Activated B cell treated with CpG ODN at 0.5 μM for 24 hours (primary cell): ENCODE measurements at regions of chr9 and their contacts with region 1.

Region 1: DNA sequence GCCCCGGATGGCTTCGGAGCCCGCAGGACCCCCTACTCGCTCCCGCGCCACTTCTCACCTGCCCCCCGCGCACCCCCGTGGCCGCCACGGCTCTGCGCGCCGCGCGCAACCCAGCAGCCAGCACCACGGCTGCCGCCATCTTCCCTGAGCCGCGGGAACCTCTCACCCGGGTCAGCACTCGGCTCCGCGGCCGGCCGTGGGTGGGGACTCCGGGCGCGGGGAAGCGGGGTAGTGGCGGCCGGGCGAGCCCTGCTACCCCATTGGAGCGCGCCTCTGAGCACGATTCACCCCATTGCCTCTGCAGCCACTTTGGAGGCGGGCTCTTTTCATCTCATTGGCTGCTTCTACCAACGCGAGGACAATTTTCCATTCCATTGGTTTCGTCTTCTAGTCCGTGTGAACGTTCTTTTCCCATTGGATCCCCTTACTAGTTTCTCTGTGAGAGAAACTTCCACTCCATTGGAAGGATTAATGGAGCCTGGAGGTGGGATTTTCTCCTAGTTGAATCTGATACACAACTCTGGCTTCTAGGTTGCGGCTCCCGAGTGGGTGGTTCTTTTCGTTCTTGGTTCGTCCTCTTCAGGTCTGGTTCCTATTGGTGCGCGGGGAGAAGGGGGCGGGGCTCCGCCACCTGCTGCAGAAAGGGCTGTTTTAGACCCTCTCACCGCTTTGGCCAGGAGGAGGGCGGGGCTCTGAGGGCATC is at the start of gene HINT2:
- DNase-seq: peak; percentile 90
- ATAC-seq: peak; percentile 83
- H3K4me3 Mint-ChIP-seq: peak within 1 kb of the TSS; percentile 98
- H3K27ac Mint-ChIP-seq: peak within 1 kb of the TSS; percentile 99
- H3K4me1 Mint-ChIP-seq: peaks cover 36% of the 10 kb centered on the region
- H3K27me3 Mint-ChIP-seq: no peaks in the 10 kb centered on the region
- CTCF ChIP-seq: no peak
- total RNA-seq, gene HINT2: 27.9 and 34.0 TPM in 2 replicates

Region 2: DNA sequence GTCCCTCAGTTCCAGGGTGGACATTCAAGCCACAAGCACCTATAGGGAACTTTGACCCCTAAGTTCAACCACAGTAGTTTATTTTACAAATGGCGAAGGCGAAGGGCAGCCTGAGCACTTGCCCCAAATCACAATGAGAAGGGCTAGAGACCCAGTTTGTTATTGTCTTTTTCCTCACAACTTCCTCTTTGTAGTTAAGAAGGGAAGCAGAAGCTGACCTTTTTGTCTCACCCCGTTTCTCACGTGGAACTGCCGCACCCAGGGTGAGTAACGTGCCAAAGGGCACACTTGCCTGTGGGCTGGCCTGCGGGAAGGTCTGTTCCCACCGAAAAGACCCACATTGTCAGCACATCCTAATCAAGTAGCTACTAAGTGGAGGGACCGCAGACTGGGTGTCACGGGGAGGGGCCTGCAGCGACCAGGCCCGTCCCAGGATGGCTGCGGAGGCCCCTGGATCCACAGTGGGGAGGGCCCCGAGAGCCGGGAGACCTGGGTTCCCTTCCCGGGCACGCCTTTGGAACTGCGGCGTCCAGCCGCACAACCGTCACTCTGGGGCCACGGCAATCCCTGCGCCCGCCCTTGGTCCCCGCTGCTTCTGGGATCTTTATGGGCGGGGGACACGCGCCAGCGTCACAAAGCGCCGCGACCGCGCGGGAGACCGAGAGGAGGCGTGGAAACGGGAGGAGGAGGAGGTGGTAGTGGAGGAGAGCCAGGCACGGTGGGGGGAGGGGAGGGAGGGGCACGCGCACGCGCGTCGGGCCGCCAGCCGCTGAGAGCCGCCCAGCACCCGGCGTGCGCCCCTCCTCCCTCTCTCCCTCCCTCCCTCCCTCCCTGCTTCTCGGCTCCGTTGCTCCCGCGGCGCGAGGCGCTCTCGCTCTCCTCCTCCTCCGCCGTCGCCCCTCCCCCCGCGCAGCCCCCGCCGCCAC is 1998.4 kb before region 1 on chr9 and contains the start of gene UBE2R2:
- CTCF ChIA-PET with region 1: no interaction called
- POLR2A ChIA-PET with region 1: no interaction called
- intact Hi-C with region 1: loop called (anchors 10 kb)
- DNase-seq: peak; percentile 79
- ATAC-seq: peak; percentile 72
- H3K4me3 Mint-ChIP-seq: peak within 1 kb of the TSS; percentile 90
- H3K27ac Mint-ChIP-seq: peak within 1 kb of the TSS; percentile 98
- H3K4me1 Mint-ChIP-seq: peaks cover 61% of the 10 kb centered on the region
- H3K27me3 Mint-ChIP-seq: no peaks in the 10 kb centered on the region
- CTCF ChIP-seq: no peak
- total RNA-seq, gene UBE2R2: 28.5 and 28.9 TPM in 2 replicates

Region 3: GRCh38 chr9:35079426-35080341 is 735.3 kb before region 1 on chr9 and contains the start of gene FANCG:
- CTCF ChIA-PET with region 1: no interaction called
- POLR2A ChIA-PET with region 1: interaction called, 11 read pairs
- intact Hi-C with region 1: no loop called
- DNase-seq: peak; percentile 80
- ATAC-seq: peak; percentile 92
- H3K4me3 Mint-ChIP-seq: peak within 1 kb of the TSS; percentile 88
- H3K27ac Mint-ChIP-seq: peak within 1 kb of the TSS; percentile 74
- H3K4me1 Mint-ChIP-seq: peaks cover 22% of the 10 kb centered on the region
- H3K27me3 Mint-ChIP-seq: no peaks in the 10 kb centered on the region
- CTCF ChIP-seq: no peak
- total RNA-seq, gene FANCG: 27.4 and 28.8 TPM in 2 replicates

Region 4: GRCh38 chr9:35436933-35437332 is 378.1 kb before region 1 on chr9:
- CTCF ChIA-PET with region 1: no interaction called
- POLR2A ChIA-PET with region 1: no interaction called
- intact Hi-C with region 1: no loop called
- DNase-seq: no peak
- ATAC-seq: no peak
- H3K4me3 Mint-ChIP-seq: no peak overlapping the region
- H3K27ac Mint-ChIP-seq: no peak overlapping the region
- H3K4me1 Mint-ChIP-seq: peaks cover 4% of the 10 kb centered on the region
- H3K27me3 Mint-ChIP-seq: peaks cover 4% of the 10 kb centered on the region
- CTCF ChIP-seq: no peak

Region 5: DNA sequence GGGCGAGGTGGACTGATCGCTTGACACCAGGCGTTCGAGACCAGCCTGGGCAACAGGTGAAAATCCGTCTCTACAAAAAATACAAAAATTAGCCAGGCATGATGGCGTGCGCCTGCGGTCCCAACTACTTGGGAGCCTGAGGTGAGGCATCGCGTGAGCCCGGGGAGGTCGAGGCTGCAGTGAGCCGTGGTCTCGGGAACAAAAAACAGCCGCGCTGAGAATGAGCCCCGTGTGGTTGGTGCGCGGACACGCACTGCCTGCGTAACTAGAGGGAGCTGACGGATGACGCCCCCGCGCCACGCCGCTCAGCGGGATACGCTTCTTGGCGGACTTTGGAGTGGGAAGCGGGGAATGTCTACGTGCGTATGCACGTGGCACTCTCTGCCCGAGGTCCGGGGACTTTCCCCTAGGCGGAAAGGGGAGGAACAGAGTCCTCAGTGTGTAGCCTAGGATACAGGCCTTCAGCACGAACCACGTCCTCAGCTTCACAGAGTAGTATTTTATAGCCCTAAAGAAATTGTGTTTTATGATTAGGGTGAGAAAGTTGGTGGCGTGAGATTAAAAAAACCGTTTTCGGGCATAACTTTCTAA is 157.4 kb before region 1 on chr9 and contains the start of gene RMRP:
- CTCF ChIA-PET with region 1: no interaction called
- POLR2A ChIA-PET with region 1: interaction called, 6 read pairs
- intact Hi-C with region 1: loop called (anchors 1 kb)
- DNase-seq: peak; percentile 81
- ATAC-seq: peak; percentile 81
- H3K4me3 Mint-ChIP-seq: peak within 1 kb of the TSS; percentile 88
- H3K27ac Mint-ChIP-seq: peak within 1 kb of the TSS; percentile 99
- H3K4me1 Mint-ChIP-seq: peaks cover 78% of the 10 kb centered on the region
- H3K27me3 Mint-ChIP-seq: peaks cover 5% of the 10 kb centered on the region
- CTCF ChIP-seq: no peak
- total RNA-seq, gene RMRP: 8,247 and 9,516 TPM in 2 replicates

Region 6: GRCh38 chr9:35790385-35791296 is 24.4 kb before region 1 on chr9:
- CTCF ChIA-PET with region 1: interaction called, 11 read pairs
- POLR2A ChIA-PET with region 1: interaction called, 6 read pairs
- intact Hi-C with region 1: loop called (anchors 1 kb)
- DNase-seq: no peak
- ATAC-seq: peak; percentile 92
- H3K4me3 Mint-ChIP-seq: peak overlapping the region; percentile 58
- H3K27ac Mint-ChIP-seq: no peak overlapping the region
- H3K4me1 Mint-ChIP-seq: peaks cover 10% of the 10 kb centered on the region
- H3K27me3 Mint-ChIP-seq: peaks cover 5% of the 10 kb centered on the region
- CTCF ChIP-seq: no peak

Region 7: DNA sequence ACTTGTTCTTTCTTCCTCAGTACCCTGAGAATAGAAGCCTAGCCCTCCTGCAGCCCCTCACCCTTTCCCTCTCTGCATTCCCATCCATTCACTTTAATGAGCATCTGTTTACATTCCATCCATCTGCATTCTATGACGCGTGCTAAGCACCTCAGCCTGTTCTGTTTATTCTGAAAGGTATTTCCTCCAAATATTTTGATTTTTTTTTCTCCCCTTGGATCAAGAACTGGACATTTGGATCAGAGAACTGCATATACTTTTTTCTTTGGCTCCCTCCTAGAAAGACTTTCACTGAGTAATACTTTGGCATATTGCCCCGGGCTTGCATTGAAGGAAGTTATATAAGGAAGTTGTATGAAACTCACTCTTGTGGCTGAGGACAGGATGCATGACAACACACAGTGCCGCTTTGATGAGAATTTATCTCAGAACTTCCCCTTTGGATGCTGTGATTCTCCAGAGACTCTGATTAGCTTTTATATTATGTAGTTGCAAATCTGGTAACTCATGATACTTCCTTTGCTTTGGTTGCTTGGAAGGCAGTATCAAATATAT is 29.8 kb after region 1 on chr9:
- CTCF ChIA-PET with region 1: no interaction called
- POLR2A ChIA-PET with region 1: interaction called, 18 read pairs
- intact Hi-C with region 1: loop called (anchors 1 kb)
- DNase-seq: no peak
- ATAC-seq: peak; percentile 80
- H3K4me3 Mint-ChIP-seq: peak overlapping the region; percentile 33
- H3K27ac Mint-ChIP-seq: peak overlapping the region; percentile 28
- H3K4me1 Mint-ChIP-seq: peaks cover 81% of the 10 kb centered on the region
- H3K27me3 Mint-ChIP-seq: no peaks in the 10 kb centered on the region
- CTCF ChIP-seq: no peak

Region 8: DNA sequence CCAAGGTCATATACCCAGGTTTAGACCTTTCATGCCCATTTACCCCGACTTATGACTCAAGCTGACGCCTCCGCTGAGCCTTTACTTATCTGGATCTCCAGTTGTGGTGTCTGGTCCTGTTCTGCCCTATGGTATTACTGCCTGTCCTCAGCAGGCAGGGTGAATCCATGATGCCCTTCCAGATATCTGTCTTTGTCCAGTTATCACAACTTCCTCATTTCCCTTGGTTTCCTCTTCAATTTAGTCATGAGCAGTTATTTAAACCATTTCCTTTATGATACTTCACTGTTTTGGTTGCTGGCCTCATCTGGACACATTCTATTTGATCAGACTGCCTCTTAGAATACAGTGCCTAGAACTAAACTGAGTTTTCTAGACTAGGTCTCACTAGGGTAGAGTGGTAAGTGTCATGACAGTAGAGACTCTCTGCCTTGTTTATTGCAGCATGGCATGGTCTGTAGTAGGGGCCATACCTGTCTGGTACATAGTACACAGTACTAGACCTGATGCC is 851.0 kb after region 1 on chr9:
- CTCF ChIA-PET with region 1: no interaction called
- POLR2A ChIA-PET with region 1: no interaction called
- intact Hi-C with region 1: no loop called
- DNase-seq: no peak
- ATAC-seq: no peak
- H3K4me3 Mint-ChIP-seq: no peak overlapping the region
- H3K27ac Mint-ChIP-seq: no peak overlapping the region
- H3K4me1 Mint-ChIP-seq: peaks cover 10% of the 10 kb centered on the region
- H3K27me3 Mint-ChIP-seq: no peaks in the 10 kb centered on the region
- CTCF ChIP-seq: no peak